ENCODE measurements at regions of chr3 and their contacts with region 1.

Region 1: GRCh38 chr3:189288348-189289235 is 116.8 kb downstream of the TPRG1 start:
- DNase-seq: no peak
- H3K4me3 Mint-ChIP-seq: peak overlapping the region; percentile 6
- H3K27ac Mint-ChIP-seq: peak overlapping the region; percentile 70
- H3K4me1 Mint-ChIP-seq: peaks cover 26% of the 10 kb centered on the region
- H3K27me3 Mint-ChIP-seq: no peaks in the 10 kb centered on the region

Region 2: GRCh38 chr3:189298469-189299375 is 10.1 kb after region 1 on chr3:
- intact Hi-C with region 1: loop called (anchors 1 kb)
- DNase-seq: no peak
- H3K4me3 Mint-ChIP-seq: peak overlapping the region; percentile 59
- H3K27ac Mint-ChIP-seq: peak overlapping the region; percentile 91
- H3K4me1 Mint-ChIP-seq: peaks cover 45% of the 10 kb centered on the region
- H3K27me3 Mint-ChIP-seq: no peaks in the 10 kb centered on the region

Region 3: GRCh38 chr3:189304446-189305351 is 16.1 kb after region 1 on chr3:
- intact Hi-C with region 1: loop called (anchors 2 kb)
- DNase-seq: peak; percentile 65
- H3K4me3 Mint-ChIP-seq: peak overlapping the region; percentile 63
- H3K27ac Mint-ChIP-seq: peak overlapping the region; percentile 91
- H3K4me1 Mint-ChIP-seq: peaks cover 58% of the 10 kb centered on the region
- H3K27me3 Mint-ChIP-seq: no peaks in the 10 kb centered on the region

Region 4: DNA sequence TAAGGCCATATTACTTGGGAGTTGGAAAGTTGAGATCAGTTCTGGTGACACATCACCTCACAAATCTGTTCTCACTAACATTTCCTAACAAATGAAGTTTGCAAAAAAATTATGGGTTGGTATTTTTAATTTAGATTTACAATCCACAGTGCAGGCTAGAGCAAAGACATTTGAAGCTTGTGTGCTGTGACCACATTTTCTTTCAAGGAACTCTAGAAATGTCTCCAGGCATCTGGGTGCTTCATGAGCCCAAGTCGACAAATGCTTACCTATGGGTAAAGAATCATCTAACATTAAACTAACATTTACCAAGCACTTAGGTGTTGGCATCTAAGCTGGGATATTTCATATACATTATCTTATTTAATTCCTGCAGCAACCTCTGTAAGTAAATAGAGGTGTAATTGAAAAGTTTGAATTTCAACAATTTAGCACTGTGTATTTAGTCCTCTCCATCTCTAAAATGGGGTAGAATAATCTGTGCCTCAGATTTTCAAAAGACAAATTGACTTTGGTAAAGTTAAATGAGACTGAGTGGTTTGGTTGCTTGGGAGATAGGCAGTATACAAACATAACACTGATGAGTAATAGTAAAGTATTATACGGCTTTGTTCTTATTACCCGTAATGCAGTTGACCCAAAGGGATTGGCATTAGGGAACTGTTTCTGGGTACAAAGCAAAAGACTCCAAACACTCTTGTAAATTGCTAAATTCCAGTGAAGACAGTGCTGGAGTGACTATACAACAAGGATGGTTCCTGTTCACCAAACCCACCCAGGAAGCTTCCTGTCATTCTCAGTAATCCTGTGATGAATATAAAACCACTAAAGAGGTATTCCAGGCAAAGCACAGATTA is 45.7 kb after region 1 on chr3:
- intact Hi-C with region 1: loop called (anchors 1 kb)
- DNase-seq: no peak
- H3K4me3 Mint-ChIP-seq: no peak overlapping the region
- H3K27ac Mint-ChIP-seq: no peak overlapping the region
- H3K4me1 Mint-ChIP-seq: peaks cover 39% of the 10 kb centered on the region
- H3K27me3 Mint-ChIP-seq: no peaks in the 10 kb centered on the region

Region 5: GRCh38 chr3:189898559-189899153 is 610.1 kb after region 1 on chr3:
- intact Hi-C with region 1: no loop called
- DNase-seq: no peak
- H3K4me3 Mint-ChIP-seq: no peak overlapping the region
- H3K27ac Mint-ChIP-seq: no peak overlapping the region
- H3K4me1 Mint-ChIP-seq: no peaks in the 10 kb centered on the region
- H3K27me3 Mint-ChIP-seq: peaks cover 1% of the 10 kb centered on the region